ENCODE measurements at regions of chr6 and their contacts with region 1.

Region 1: GRCh38 chr6:125114248-125114858 is 39.2 kb upstream of the TPD52L1 start:
- DNase-seq: no peak
- H3K4me3 ChIP-seq: no peak overlapping the region
- CTCF ChIP-seq: peak; percentile 53

Region 2: GRCh38 chr6:124870611-124871459 is 243.5 kb before region 1 on chr6:
- CTCF ChIA-PET with region 1: interaction called, 175 read pairs
- POLR2A ChIA-PET with region 1: no interaction called
- DNase-seq: no peak
- H3K4me3 ChIP-seq: no peak overlapping the region
- CTCF ChIP-seq: peak; percentile 49

Region 3: DNA sequence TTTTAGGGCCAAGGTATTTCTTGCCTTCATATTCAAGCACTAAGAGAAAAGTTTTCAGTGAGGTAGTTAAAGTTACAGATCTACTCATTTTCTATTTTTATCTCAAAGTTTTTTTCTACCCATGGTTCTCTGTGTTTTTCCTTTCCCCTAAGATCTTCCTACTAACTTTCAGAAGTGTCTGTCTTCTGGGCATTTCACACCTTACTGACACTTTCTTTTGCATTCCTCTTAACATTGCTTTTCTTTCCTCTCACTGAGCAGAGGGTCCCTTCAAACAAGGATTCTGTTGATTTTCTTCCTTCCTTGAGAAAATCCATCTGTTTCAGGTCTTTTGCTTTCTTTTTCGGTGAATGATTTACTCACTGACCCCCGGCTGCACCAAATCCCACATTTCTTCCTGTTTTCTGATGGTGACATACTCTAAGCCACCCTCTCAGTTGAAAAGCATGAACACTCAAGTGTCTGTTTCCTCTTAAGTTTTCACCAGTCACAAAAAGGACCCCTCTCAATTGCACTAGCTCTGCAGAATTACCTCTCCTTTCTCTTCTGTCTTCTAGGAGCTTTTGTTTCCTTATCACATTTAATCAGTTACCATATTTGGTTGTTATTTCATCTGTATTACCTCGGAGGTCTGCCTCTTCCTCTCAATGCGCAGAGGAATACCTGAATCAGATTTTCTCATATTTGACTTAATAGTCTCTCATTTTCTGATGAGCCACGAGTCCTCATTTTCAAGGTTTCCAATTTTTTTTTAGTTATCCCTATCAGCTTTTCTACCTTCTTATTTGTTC is 225.6 kb before region 1 on chr6:
- CTCF ChIA-PET with region 1: interaction called, 10 read pairs
- POLR2A ChIA-PET with region 1: no interaction called
- DNase-seq: no peak
- H3K4me3 ChIP-seq: peak overlapping the region; percentile 10; the same call in 1 of the 2 replicates
- CTCF ChIP-seq: no peak

Region 4: GRCh38 chr6:124961777-124962611 is 152.4 kb before region 1 on chr6 and contains the start of gene RNF217:
- CTCF ChIA-PET with region 1: interaction called, 22 read pairs
- POLR2A ChIA-PET with region 1: no interaction called
- DNase-seq: no peak
- H3K4me3 ChIP-seq: peak within 1 kb of the TSS; percentile 86
- CTCF ChIP-seq: no peak

Region 5: GRCh38 chr6:125099211-125100073 is 14.9 kb before region 1 on chr6:
- CTCF ChIA-PET with region 1: interaction called, 48 read pairs
- POLR2A ChIA-PET with region 1: no interaction called
- DNase-seq: no peak
- H3K4me3 ChIP-seq: peak overlapping the region; percentile 56
- CTCF ChIP-seq: no peak

Region 6: GRCh38 chr6:125153391-125154117 is 39.2 kb after region 1 on chr6 and contains the start of gene TPD52L1:
- CTCF ChIA-PET with region 1: interaction called, 10 read pairs
- POLR2A ChIA-PET with region 1: no interaction called
- DNase-seq: no peak
- H3K4me3 ChIP-seq: peak within 1 kb of the TSS; percentile 74
- CTCF ChIP-seq: peak; percentile 92

Region 7: GRCh38 chr6:125273965-125274364 is 159.6 kb after region 1 on chr6:
- CTCF ChIA-PET with region 1: no interaction called
- POLR2A ChIA-PET with region 1: no interaction called
- DNase-seq: no peak
- H3K4me3 ChIP-seq: no peak overlapping the region
- CTCF ChIP-seq: no peak

Region 8: DNA sequence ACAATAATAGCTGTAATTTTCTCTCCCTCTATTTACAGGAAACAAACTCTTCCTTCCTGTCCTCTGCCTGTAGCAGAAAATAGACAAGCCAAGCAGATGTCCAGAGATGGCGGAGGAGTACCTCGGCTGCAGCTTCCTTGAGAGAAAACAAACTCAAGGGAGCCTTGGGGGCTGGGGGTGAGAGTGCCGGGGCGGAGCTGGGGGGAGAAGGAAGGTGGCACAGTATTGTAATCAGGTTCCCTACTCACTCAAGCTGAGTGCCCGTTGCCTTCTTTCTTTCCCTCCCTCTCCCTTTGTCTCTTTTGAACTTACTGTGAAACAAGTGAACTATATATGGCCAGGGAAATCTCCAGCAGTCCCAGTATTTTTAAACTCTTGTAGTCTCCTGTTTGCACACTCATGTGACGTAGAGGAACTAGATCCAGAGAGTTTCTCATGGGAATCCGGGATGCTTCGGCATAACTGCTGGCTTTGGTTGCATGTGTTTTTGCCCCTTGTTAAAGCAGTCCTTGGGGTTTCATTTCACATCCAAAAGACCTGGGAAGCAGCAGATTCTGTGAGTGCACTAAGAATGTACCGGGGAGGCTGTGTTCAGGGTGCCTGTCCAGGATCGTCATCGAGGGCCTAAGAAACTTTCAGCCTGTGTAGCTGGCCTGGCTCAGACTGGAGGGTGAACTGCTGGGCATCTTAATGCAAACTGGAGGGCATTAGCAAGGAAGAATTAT is 232.0 kb after region 1 on chr6:
- CTCF ChIA-PET with region 1: no interaction called
- POLR2A ChIA-PET with region 1: no interaction called
- DNase-seq: no peak
- H3K4me3 ChIP-seq: no peak overlapping the region
- CTCF ChIP-seq: no peak

Region 9: GRCh38 chr6:126464245-126464644 is 1349.9 kb after region 1 on chr6:
- CTCF ChIA-PET with region 1: no interaction called
- POLR2A ChIA-PET with region 1: no interaction called
- DNase-seq: no peak
- H3K4me3 ChIP-seq: no peak overlapping the region
- CTCF ChIP-seq: no peak